ENCODE measurements at regions of chr1 and their contacts with region 1.

Region 1: DNA sequence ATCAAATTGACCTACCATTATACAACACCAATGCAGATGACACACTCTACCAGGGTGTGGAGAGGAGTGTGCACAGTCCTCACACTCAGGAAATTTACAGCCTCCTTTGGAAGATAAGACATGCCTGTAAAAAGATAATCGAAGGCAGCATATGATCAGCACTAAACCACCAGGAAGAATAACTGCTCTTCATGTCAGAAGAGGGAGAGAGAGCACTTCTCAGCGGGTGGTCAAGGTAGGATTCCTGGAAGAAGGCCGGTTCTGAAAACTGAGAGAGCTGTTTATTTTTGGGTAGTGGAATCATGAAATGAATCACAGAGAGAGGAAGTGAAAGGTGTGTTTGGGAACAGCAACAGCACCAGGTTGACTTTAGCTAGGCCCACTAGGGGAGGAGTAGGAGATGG is 14.0 kb upstream of the ZNF697 start:
- DNase-seq: no peak
- CTCF ChIP-seq: no peak

Region 2: DNA sequence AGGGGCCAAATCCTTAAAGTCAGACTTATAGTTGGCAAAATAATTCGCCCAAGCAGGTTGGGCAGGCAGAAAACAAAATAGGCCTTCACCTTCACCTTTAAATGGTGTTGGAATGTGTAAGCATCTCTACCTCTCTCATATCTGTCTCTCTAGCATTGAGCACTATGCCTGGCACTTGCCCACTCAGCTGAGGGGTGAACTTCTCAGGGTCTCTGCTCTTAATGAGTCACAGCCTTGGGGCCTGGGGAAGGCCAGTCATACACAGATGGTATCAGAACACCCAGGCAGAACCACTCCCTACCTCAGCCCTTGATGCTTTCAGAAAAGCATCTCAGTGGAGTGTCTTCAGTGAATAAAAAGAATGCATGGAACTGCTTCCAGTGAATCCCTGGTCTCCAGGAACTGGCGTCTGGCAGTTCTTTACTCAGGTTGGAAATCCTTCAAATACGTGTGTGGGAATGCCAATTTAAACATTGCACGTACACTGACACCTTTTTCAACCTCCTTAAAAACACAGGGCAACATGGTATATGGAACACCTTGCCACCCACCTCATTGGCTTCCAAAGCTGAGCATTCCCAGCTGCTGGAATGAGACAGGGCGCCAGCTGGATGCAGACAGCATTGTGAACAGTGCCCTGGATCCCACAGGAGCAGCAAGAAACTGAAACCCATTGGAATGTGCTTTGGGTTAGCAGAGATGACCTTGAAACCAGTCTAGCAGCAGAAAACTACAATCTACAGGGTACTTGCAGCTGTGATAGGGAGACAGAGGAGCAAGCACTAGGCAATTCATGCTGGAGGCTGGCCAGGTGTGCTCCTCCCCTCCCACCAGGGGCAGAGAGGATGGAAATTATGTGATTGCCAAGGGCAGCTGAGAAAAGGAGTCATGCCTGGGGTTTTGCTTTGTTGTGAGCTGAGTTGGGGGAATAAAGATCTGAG is 44.0 kb before region 1 on chr1:
- in situ Hi-C with region 1: loop called (anchors 5 kb)
- DNase-seq: no peak
- CTCF ChIP-seq: no peak

Measured in GM13976 (cell line).